Caco-2 (cell line): ENCODE measurements at regions of chr14 and their contacts with region 1.

Region 1: DNA sequence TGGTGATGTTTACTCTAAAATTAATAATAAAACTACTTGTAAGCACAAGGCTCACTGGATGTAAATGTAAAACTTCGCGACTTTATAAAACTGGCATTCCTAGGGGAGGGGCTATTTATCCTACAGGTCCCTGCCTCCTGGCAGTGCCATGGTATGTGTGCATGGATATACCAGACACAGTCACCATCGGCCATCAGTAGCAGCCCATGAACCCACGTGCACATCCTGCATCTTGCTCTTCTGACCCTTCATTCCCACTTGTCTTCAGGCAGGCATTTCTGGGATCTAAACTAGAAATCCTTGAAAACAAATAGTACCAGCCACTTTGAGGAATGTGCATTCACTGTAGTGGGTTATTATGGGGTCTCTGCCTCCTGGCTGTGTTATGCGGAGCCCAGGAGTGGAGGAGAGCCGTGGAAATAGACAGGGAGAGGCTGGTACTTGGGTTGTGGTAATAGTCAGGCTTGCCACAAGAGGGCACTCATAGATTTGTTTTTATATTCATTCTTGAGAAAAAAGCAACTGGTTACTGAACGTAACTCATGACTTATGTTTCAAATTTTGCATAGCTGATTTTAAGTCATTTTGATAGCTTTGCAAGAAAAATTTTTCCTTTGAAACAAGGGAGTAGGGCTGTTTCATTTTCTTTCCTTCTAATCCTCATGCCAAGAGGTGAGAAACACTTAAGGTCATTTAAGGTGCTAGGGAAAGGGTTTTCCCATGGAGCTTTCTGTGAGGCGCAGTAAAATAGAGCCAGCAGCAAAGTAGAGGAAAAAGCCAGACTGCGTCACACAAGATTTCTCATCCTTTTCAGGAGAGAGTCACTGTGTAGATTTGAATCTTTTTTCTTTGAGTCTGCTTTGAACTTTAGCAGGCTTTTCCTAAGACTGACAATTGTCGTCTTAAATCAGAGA is 17.4 kb upstream of the GALNT16 start:
- DNase-seq: peak; percentile 56 to 61
- H3K4me3 ChIP-seq: no peak overlapping the region
- H3K4me3 Mint-ChIP-seq: no peak overlapping the region
- H3K27ac Mint-ChIP-seq: no peak overlapping the region
- H3K4me1 ChIP-seq: peaks cover 8% of the 10 kb centered on the region; the same call in 1 of the 2 replicates
- H3K4me1 Mint-ChIP-seq: peaks cover 7% of the 10 kb centered on the region
- H3K27me3 ChIP-seq: no peaks in the 10 kb centered on the region
- H3K27me3 Mint-ChIP-seq: no peaks in the 10 kb centered on the region
- CTCF ChIP-seq: peak; percentile 69 to 78

Region 2: GRCh38 chr14:69129264-69129880 is 113.2 kb before region 1 on chr14:
- CTCF ChIA-PET with region 1: interaction called, 3 read pairs
- POLR2A ChIA-PET with region 1: no interaction called
- intact Hi-C with region 1: loop called (anchors 1 kb)
- DNase-seq: peak; percentile 64 to 72
- H3K4me3 ChIP-seq: no peak overlapping the region
- H3K4me3 Mint-ChIP-seq: no peak overlapping the region
- H3K27ac Mint-ChIP-seq: no peak overlapping the region
- H3K4me1 ChIP-seq: no peaks in the 10 kb centered on the region; the same call in 1 of the 2 replicates
- H3K4me1 Mint-ChIP-seq: peaks cover 13% of the 10 kb centered on the region
- H3K27me3 ChIP-seq: no peaks in the 10 kb centered on the region
- H3K27me3 Mint-ChIP-seq: no peaks in the 10 kb centered on the region
- CTCF ChIP-seq: peak; percentile 91 to 93

Region 3: DNA sequence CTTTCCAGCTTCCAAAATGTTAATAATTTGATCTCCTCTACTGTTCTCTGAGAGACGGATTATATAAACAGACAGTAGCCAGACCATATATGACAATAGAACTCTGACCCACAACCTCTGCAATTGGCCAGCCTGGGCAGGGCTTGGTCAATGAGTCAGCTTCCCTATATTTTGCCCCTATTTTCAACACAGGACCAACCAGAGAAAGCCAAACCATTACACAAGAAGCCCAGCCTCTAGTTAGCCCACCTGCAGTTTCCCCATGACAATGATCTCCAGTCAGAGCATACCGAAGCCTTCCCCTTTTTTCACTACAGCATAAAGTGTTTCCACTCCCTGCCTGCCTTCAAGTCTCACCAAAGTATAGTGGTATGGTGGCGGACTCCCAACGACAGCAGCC is 58.8 kb before region 1 on chr14:
- CTCF ChIA-PET with region 1: no interaction called
- POLR2A ChIA-PET with region 1: no interaction called
- intact Hi-C with region 1: no loop called
- DNase-seq: no peak
- H3K4me3 ChIP-seq: no peak overlapping the region
- H3K4me3 Mint-ChIP-seq: no peak overlapping the region
- H3K27ac Mint-ChIP-seq: no peak overlapping the region
- H3K4me1 ChIP-seq: no peaks in the 10 kb centered on the region
- H3K4me1 Mint-ChIP-seq: no peaks in the 10 kb centered on the region
- H3K27me3 ChIP-seq: no peaks in the 10 kb centered on the region
- H3K27me3 Mint-ChIP-seq: no peaks in the 10 kb centered on the region
- CTCF ChIP-seq: no peak

Region 4: DNA sequence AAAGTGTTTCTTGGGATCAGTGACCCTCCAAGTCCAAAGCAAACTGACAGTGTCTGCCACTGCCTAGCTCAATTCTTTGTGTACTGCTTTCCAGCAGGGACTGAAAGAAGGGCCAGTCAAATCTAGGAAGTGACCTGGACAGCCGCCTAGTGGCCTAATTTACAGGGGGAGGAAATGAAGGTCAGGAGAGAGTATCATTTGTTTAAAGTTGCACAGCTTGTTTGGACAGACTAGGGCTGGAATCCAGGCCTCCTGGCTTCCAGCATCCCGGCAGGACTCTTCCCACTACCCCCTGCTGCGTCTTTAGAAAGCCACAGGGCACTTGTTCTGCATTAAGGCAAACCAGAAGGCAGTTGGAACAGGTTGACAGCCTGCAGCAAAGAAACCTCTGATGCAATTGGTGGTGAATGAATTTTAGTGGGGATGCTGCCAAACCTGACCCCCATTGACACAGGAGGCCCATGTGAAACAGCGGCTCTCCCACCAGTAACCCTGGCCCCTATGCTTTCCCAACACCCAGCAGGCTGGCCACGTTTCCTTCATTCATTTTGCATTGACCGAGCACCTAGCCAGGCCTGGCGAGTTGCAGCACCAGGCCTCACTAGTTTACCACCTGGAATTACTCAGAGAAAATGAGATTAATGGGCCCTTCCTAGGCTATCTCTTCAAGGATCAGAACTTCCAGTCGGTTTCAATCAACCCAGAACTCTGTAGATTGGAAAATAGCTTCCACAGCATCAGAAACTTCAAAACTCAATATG is 45.6 kb after region 1 on chr14:
- CTCF ChIA-PET with region 1: interaction called, 31 read pairs
- POLR2A ChIA-PET with region 1: no interaction called
- intact Hi-C with region 1: loop called (anchors 1 kb)
- DNase-seq: peak in 1 of 2 experiments; percentile 34
- H3K4me3 ChIP-seq: no peak overlapping the region
- H3K4me3 Mint-ChIP-seq: no peak overlapping the region
- H3K27ac Mint-ChIP-seq: no peak overlapping the region
- H3K4me1 ChIP-seq: peaks cover 4% of the 10 kb centered on the region; the same call in 1 of the 2 replicates
- H3K4me1 Mint-ChIP-seq: peaks cover 11% of the 10 kb centered on the region
- H3K27me3 ChIP-seq: no peaks in the 10 kb centered on the region
- H3K27me3 Mint-ChIP-seq: no peaks in the 10 kb centered on the region
- CTCF ChIP-seq: peak; percentile 38 to 45

Region 5: GRCh38 chr14:69346710-69347109 is 104.1 kb after region 1 on chr14:
- CTCF ChIA-PET with region 1: interaction called, 5 read pairs
- POLR2A ChIA-PET with region 1: no interaction called
- intact Hi-C with region 1: loop called (anchors 1 kb)
- DNase-seq: peak; percentile 55 to 68
- H3K4me3 ChIP-seq: no peak overlapping the region
- H3K4me3 Mint-ChIP-seq: no peak overlapping the region
- H3K27ac Mint-ChIP-seq: no peak overlapping the region
- H3K4me1 ChIP-seq: no peaks in the 10 kb centered on the region
- H3K4me1 Mint-ChIP-seq: peaks cover 17% of the 10 kb centered on the region
- H3K27me3 ChIP-seq: no peaks in the 10 kb centered on the region
- H3K27me3 Mint-ChIP-seq: no peaks in the 10 kb centered on the region
- CTCF ChIP-seq: peak; percentile 63 to 85

Region 6: DNA sequence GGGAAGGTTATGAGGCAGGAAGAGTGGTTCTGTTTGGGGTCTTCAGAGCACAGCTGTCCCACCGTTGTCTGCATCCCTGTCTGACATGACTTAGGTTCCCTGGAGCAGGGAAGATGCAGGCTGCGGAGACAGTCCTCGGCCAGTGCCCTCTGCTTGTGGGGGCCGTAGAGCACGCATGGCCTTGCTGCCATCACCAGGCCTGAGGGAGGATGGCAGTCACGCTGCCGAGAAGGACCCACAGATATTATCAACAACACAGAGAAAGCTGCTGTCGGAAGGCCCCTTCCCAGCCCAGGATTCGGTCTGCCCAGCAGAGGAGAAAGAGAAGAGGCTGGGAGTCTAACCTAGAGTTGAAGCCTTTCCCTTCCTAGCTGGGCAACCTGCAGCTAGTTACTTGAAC is 120.5 kb after region 1 on chr14:
- CTCF ChIA-PET with region 1: no interaction called
- POLR2A ChIA-PET with region 1: no interaction called
- intact Hi-C with region 1: loop called (anchors 5 kb)
- DNase-seq: peak in 1 of 2 experiments; percentile 38
- H3K4me3 ChIP-seq: no peak overlapping the region
- H3K4me3 Mint-ChIP-seq: no peak overlapping the region
- H3K27ac Mint-ChIP-seq: no peak overlapping the region
- H3K4me1 ChIP-seq: no peaks in the 10 kb centered on the region
- H3K4me1 Mint-ChIP-seq: no peaks in the 10 kb centered on the region
- H3K27me3 ChIP-seq: no peaks in the 10 kb centered on the region
- H3K27me3 Mint-ChIP-seq: no peaks in the 10 kb centered on the region
- CTCF ChIP-seq: peak in 1 of 2 experiments; percentile 58

Region 7: GRCh38 chr14:69460093-69460701 is 217.6 kb after region 1 on chr14:
- CTCF ChIA-PET with region 1: interaction called, 7 read pairs
- POLR2A ChIA-PET with region 1: no interaction called
- intact Hi-C with region 1: loop called (anchors 1 kb)
- DNase-seq: peak; percentile 49 to 66
- H3K4me3 ChIP-seq: no peak overlapping the region
- H3K4me3 Mint-ChIP-seq: no peak overlapping the region
- H3K27ac Mint-ChIP-seq: no peak overlapping the region
- H3K4me1 ChIP-seq: no peaks in the 10 kb centered on the region
- H3K4me1 Mint-ChIP-seq: no peaks in the 10 kb centered on the region
- H3K27me3 ChIP-seq: no peaks in the 10 kb centered on the region
- H3K27me3 Mint-ChIP-seq: no peaks in the 10 kb centered on the region
- CTCF ChIP-seq: peak; percentile 69 to 77

Region 8: GRCh38 chr14:69574263-69574953 is 331.8 kb after region 1 on chr14 and contains the start of gene CCDC177:
- CTCF ChIA-PET with region 1: no interaction called
- POLR2A ChIA-PET with region 1: no interaction called
- intact Hi-C with region 1: loop called (anchors 5 kb)
- DNase-seq: peak; percentile 59 to 81
- H3K4me3 ChIP-seq: peak within 1 kb of the TSS; percentile 26
- H3K4me3 Mint-ChIP-seq: peak within 1 kb of the TSS; percentile 87
- H3K27ac Mint-ChIP-seq: peak within 1 kb of the TSS; percentile 39
- H3K4me1 ChIP-seq: peaks cover 40% of the 10 kb centered on the region
- H3K4me1 Mint-ChIP-seq: peaks cover 31% of the 10 kb centered on the region
- H3K27me3 ChIP-seq: no peaks in the 10 kb centered on the region
- H3K27me3 Mint-ChIP-seq: peaks cover 3% of the 10 kb centered on the region
- CTCF ChIP-seq: peak; percentile 89 to 92
- total RNA-seq, gene CCDC177: 0.56 and 0.82 TPM in 2 replicates